ENCODE measurements at regions of chr16 and their contacts with region 1.

Region 1: GRCh38 chr16:74862741-74863244 is 88.2 kb upstream of the FA2H start:
- DNase-seq: no peak
- H3K4me3 Mint-ChIP-seq: no peak overlapping the region
- H3K27ac Mint-ChIP-seq: no peak overlapping the region
- H3K4me1 Mint-ChIP-seq: peaks cover 6% of the 10 kb centered on the region
- H3K27me3 Mint-ChIP-seq: no peaks in the 10 kb centered on the region

Region 2: GRCh38 chr16:74695450-74696422 is 167.1 kb before region 1 on chr16:
- CTCF ChIA-PET with region 1: interaction called, 15 read pairs
- POLR2A ChIA-PET with region 1: interaction called, 5 read pairs
- DNase-seq: peak; percentile 75
- H3K4me3 Mint-ChIP-seq: peak overlapping the region; percentile 73
- H3K27ac Mint-ChIP-seq: peak overlapping the region; percentile 73
- H3K4me1 Mint-ChIP-seq: peaks cover 52% of the 10 kb centered on the region
- H3K27me3 Mint-ChIP-seq: no peaks in the 10 kb centered on the region

Region 3: DNA sequence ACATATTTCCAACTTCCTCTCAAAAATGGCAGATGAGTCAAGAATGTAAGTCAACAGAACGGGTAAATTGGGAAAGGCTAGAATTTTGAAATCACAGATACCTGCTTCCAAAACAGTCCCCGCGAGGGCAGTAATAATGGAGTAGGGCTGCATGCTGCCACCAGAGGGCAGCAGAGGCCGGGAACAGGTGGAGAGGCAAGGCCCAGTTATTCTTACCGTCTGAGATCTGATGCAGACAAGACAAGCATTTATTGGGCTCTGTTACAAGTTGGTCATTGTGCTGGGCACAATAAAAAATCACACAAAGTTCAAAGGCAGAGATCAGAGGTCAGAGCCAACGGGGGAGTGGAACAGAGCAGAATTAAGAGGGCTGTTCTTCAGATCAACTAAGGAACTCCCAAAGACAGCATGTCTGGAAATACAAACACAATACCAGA is 153.3 kb before region 1 on chr16:
- CTCF ChIA-PET with region 1: interaction called, 38 read pairs
- POLR2A ChIA-PET with region 1: no interaction called
- DNase-seq: peak; percentile 85
- H3K4me3 Mint-ChIP-seq: no peak overlapping the region
- H3K27ac Mint-ChIP-seq: no peak overlapping the region
- H3K4me1 Mint-ChIP-seq: peaks cover 11% of the 10 kb centered on the region
- H3K27me3 Mint-ChIP-seq: peaks cover 5% of the 10 kb centered on the region

Region 4: GRCh38 chr16:74813109-74813641 is 49.6 kb before region 1 on chr16:
- CTCF ChIA-PET with region 1: interaction called, 24 read pairs
- POLR2A ChIA-PET with region 1: no interaction called
- DNase-seq: peak; percentile 72
- H3K4me3 Mint-ChIP-seq: no peak overlapping the region
- H3K27ac Mint-ChIP-seq: no peak overlapping the region
- H3K4me1 Mint-ChIP-seq: no peaks in the 10 kb centered on the region
- H3K27me3 Mint-ChIP-seq: peaks cover 3% of the 10 kb centered on the region

Region 5: GRCh38 chr16:74852500-74852875 is 10.3 kb before region 1 on chr16:
- CTCF ChIA-PET with region 1: interaction called, 13 read pairs
- POLR2A ChIA-PET with region 1: no interaction called
- DNase-seq: no peak
- H3K4me3 Mint-ChIP-seq: no peak overlapping the region
- H3K27ac Mint-ChIP-seq: no peak overlapping the region
- H3K4me1 Mint-ChIP-seq: peaks cover 3% of the 10 kb centered on the region
- H3K27me3 Mint-ChIP-seq: no peaks in the 10 kb centered on the region

Region 6: DNA sequence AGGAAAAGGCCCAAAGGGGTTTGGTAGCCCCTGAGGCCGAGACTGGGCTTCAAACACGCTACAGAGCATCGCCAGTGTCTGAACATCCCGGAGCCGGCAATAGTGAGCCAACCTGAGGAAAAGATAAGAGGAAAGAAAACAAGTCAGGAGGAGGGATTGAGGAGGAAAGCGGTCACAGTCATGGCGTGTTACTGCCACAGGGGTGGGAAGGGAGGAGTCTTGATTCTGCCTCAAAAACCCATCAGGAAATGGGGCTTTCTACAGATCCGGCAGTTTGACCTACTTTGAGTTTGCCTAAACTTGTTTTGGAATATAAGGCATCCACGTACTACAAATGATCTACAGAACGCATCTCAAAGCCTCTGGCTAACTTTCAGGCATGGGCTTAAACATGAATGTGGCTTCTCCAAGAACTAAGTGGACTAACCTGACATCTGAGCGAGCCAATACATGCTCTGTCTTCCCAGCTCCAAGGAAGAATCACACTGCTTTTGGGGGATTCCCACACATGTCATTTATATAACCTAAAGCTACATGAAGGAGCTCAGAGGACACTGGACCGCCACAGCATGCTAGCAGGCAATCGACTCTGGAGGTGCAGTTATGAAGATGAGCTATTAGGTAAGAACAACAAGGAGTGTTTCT is 25.5 kb after region 1 on chr16:
- CTCF ChIA-PET with region 1: interaction called, 22 read pairs
- POLR2A ChIA-PET with region 1: no interaction called
- DNase-seq: peak; percentile 33
- H3K4me3 Mint-ChIP-seq: peak overlapping the region; percentile 39
- H3K27ac Mint-ChIP-seq: peak overlapping the region; percentile 91
- H3K4me1 Mint-ChIP-seq: peaks cover 30% of the 10 kb centered on the region
- H3K27me3 Mint-ChIP-seq: no peaks in the 10 kb centered on the region

Measured in activated CD4-positive, alpha-beta memory T cell treated with anti-CD3 and anti-CD28 coated beads, Interleukin-2, amount 10 ng/mL, durations not matched to agents 7 days and 5 days (primary cell).